ENCODE measurements at regions of chr11 and their contacts with region 1.

Region 1: GRCh38 chr11:75022759-75023396 is 34.1 kb downstream of the NEU3 start:
- DNase-seq: no peak
- H3K4me3 ChIP-seq: no peak overlapping the region
- H3K27ac ChIP-seq: no peak overlapping the region
- H3K4me1 ChIP-seq: no peaks in the 10 kb centered on the region
- H3K27me3 ChIP-seq: no peaks in the 10 kb centered on the region
- CTCF ChIP-seq: peak; percentile 86 to 97 (median 90)
- POLR2A ChIP-seq: no peak

Region 2: DNA sequence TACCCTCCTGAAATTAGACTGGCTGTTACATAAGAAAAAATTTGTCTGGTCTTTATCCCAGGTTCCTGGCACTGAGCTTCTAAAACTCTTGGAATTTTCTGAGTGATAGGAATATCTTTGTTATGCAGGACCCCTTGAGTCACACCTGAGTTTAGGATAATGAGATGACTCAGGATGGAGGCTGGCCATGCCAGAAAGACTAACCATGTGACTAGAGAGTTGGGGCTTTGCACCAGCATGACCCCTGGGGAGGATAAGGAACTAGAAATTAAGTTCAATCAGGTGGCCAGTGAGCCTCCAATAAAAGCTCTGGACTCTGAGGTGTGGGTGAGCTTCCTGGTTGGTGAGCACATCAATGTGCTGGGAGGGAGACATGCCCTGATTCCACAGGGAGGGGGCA is 162.1 kb before region 1 on chr11:
- intact Hi-C with region 1: no loop called
- DNase-seq: no peak
- H3K4me3 ChIP-seq: no peak overlapping the region
- H3K27ac ChIP-seq: no peak overlapping the region
- H3K4me1 ChIP-seq: no peaks in the 10 kb centered on the region
- H3K27me3 ChIP-seq: no peaks in the 10 kb centered on the region
- CTCF ChIP-seq: no peak
- POLR2A ChIP-seq: no peak

Region 3: GRCh38 chr11:75248690-75249268 is 225.9 kb after region 1 on chr11:
- intact Hi-C with region 1: loop called (anchors 5 kb)
- DNase-seq: no peak
- H3K4me3 ChIP-seq: no peak overlapping the region
- H3K27ac ChIP-seq: no peak overlapping the region
- H3K4me1 ChIP-seq: no peaks in the 10 kb centered on the region
- H3K27me3 ChIP-seq: peaks cover 0 to 33% (median 0%) of the 10 kb centered on the region in 4 donors
- CTCF ChIP-seq: peak; percentile 89 to 98 (median 98)
- POLR2A ChIP-seq: no peak

Measured in esophagus squamous epithelium (tissue), 5 donors.